PC-3 (cell line): ENCODE measurements at regions of chr11 and their contacts with region 1.

Region 1: GRCh38 chr11:12893787-12894672 is 115.1 kb upstream of the RASSF10 start:
- DNase-seq: peak; percentile 67
- ATAC-seq: peak; percentile 64
- H3K4me3 ChIP-seq: no peak overlapping the region
- H3K27ac ChIP-seq: no peak overlapping the region
- H3K4me1 ChIP-seq: no peaks in the 10 kb centered on the region
- H3K27me3 ChIP-seq: no peaks in the 10 kb centered on the region
- CTCF ChIP-seq: peak; percentile 89

Region 2: GRCh38 chr11:11641581-11641980 is 1252.4 kb before region 1 on chr11:
- CTCF ChIA-PET with region 1: no interaction called
- POLR2A ChIA-PET with region 1: no interaction called
- intact Hi-C with region 1: no loop called
- DNase-seq: no peak
- ATAC-seq: no peak
- H3K4me3 ChIP-seq: no peak overlapping the region
- H3K27ac ChIP-seq: no peak overlapping the region
- H3K4me1 ChIP-seq: no peaks in the 10 kb centered on the region
- H3K27me3 ChIP-seq: peaks cover 26% of the 10 kb centered on the region
- CTCF ChIP-seq: no peak

Region 3: DNA sequence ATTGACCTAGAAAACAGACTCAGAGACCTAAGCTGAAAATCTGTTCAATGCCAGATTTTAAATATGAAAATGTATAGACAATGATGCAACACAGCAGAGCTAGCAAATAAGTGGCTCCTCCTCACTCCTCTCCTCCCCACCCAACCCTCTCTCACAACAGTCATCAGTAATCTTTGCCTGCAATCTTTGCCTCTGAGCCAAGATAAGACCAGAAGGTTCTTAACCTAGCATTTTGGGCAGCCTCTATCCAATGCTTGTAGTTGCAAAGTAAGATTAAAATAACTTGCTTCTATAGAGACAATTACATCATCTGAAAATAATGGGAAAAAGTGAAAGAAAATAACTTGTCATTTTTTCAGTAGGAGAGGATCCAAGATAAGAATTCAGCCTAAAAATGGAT is 399.3 kb before region 1 on chr11:
- CTCF ChIA-PET with region 1: no interaction called
- POLR2A ChIA-PET with region 1: no interaction called
- intact Hi-C with region 1: loop called (anchors 5 kb)
- DNase-seq: no peak
- ATAC-seq: no peak
- H3K4me3 ChIP-seq: no peak overlapping the region
- H3K27ac ChIP-seq: no peak overlapping the region
- H3K4me1 ChIP-seq: no peaks in the 10 kb centered on the region
- H3K27me3 ChIP-seq: no peaks in the 10 kb centered on the region
- CTCF ChIP-seq: no peak

Region 4: DNA sequence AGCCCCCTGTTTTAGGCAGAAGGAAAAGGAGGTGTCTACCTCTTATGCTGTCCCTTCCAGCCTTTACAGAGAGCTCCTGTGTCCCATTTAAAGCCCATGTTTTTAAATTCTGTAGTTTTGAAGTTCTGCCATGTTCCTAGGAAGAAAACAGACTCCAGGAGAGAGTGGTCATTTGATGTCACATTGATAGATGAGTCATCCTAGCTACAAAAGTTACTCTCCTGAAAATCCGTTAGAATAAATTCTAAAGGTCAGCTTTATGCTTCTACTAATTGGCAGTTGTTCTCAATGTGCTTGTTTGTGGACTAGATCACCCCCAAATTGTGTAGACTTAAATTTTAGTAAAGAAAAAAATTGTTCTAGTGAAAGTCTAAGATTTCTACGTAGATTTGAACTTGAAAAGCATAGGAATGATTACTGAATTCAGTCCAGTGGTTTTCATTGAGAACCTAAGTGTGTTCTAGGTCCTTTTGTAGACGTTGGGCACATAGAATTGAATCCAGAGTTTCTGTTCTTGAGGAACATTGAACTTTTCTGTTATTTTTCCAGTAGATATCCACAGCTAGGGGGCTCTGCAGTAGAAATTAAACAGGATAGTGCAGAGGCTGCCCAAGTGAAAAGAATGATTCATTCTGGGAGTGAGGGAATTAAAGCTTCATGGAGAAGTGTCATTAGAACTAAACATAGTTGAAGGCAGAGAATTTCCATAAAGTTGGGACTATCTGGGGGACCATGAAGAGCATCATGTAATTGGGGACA is 25.5 kb before region 1 on chr11:
- CTCF ChIA-PET with region 1: no interaction called
- POLR2A ChIA-PET with region 1: no interaction called
- intact Hi-C with region 1: no loop called
- DNase-seq: peak; percentile 25
- ATAC-seq: peak; percentile 56
- H3K4me3 ChIP-seq: no peak overlapping the region
- H3K27ac ChIP-seq: no peak overlapping the region
- H3K4me1 ChIP-seq: 0 out of 2 replicates have a peak, but pooled peaks cover 7% of the 10 kb centered on the region
- H3K27me3 ChIP-seq: no peaks in the 10 kb centered on the region
- CTCF ChIP-seq: peak; percentile 56